ENCODE measurements at regions of chr19 and their contacts with region 1.

Region 1: GRCh38 chr19:6632002-6632621 is 37.8 kb downstream of the TNFSF14 start:
- DNase-seq: peak; percentile 89
- ATAC-seq: peak; percentile 85
- H3K4me3 Mint-ChIP-seq: no peak overlapping the region
- H3K27ac Mint-ChIP-seq: peak overlapping the region; percentile 52
- H3K4me1 Mint-ChIP-seq: peaks cover 30% of the 10 kb centered on the region
- H3K27me3 Mint-ChIP-seq: no peaks in the 10 kb centered on the region

Region 2: GRCh38 chr19:6572217-6572616 is 59.9 kb before region 1 on chr19:
- CTCF ChIA-PET with region 1: no interaction called
- DNase-seq: no peak
- ATAC-seq: no peak
- H3K4me3 Mint-ChIP-seq: no peak overlapping the region
- H3K27ac Mint-ChIP-seq: no peak overlapping the region
- H3K4me1 Mint-ChIP-seq: no peaks in the 10 kb centered on the region
- H3K27me3 Mint-ChIP-seq: peaks cover 35% of the 10 kb centered on the region

Region 3: GRCh38 chr19:6668691-6669090 is 36.6 kb after region 1 on chr19:
- CTCF ChIA-PET with region 1: interaction called, 11 read pairs
- DNase-seq: peak; percentile 58
- ATAC-seq: no peak
- H3K4me3 Mint-ChIP-seq: peak overlapping the region; percentile 99
- H3K27ac Mint-ChIP-seq: peak overlapping the region; percentile 90
- H3K4me1 Mint-ChIP-seq: peaks cover 44% of the 10 kb centered on the region
- H3K27me3 Mint-ChIP-seq: peaks cover 9% of the 10 kb centered on the region

Region 4: GRCh38 chr19:6674868-6675305 is 42.8 kb after region 1 on chr19:
- CTCF ChIA-PET with region 1: interaction called, 11 read pairs
- DNase-seq: peak; percentile 98
- ATAC-seq: peak; percentile 77
- H3K4me3 Mint-ChIP-seq: peak overlapping the region; percentile 73
- H3K27ac Mint-ChIP-seq: peak overlapping the region; percentile 90
- H3K4me1 Mint-ChIP-seq: peaks cover 69% of the 10 kb centered on the region
- H3K27me3 Mint-ChIP-seq: peaks cover 9% of the 10 kb centered on the region

Region 5: DNA sequence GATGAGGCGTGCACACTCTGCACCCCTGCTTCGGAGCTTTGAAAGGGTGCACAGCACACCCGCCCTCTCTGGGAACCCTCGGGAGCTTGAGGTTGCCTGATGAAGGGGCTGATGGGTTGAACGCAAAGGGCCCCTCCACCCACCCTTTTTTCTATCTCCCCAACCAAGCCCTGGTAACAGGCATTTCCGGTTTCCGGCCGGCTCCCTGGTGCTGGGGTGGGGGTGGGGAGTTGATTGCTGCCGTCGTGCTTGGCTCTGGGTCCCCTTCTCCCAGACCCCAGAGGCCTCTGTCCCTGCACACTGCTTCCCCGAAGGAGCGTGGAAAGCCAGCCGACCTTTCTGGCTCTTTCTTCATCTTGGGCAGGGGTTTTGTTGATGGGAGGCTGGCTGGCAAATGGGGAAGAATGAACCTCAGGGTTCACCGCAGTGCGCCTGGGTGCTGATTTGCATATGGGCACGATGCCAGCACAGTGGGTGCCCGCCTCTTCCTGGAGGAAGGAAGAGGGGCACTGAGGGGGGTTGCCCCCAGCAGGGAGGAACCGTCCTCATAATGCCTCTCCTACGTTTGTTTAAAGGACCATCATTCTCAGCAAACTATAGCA is 169.5 kb after region 1 on chr19:
- CTCF ChIA-PET with region 1: no interaction called
- DNase-seq: peak; percentile 90
- ATAC-seq: peak; percentile 74
- H3K4me3 Mint-ChIP-seq: peak overlapping the region; percentile 78
- H3K27ac Mint-ChIP-seq: peak overlapping the region; percentile 93
- H3K4me1 Mint-ChIP-seq: peaks cover 54% of the 10 kb centered on the region
- H3K27me3 Mint-ChIP-seq: no peaks in the 10 kb centered on the region

Region 6: DNA sequence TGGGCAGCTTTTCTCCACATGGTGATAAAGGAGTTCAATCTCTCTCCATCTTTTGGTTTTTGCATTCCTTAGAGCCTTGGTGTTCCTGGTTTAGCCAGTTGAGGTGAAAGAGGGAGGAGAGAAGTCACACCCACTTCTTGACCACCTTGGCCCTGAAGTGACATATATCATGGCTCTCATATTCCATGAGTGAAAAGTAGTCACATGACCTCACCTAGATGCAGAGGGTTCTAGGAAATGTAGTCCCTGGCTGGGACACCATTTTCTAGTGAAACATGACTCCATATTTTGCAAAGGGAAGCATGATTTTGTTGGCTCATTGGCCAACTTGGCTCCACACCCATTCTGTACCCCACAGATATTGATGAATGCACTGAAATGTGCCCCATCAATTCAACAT is 271.3 kb after region 1 on chr19:
- CTCF ChIA-PET with region 1: no interaction called
- DNase-seq: no peak
- ATAC-seq: no peak
- H3K4me3 Mint-ChIP-seq: no peak overlapping the region
- H3K27ac Mint-ChIP-seq: no peak overlapping the region
- H3K4me1 Mint-ChIP-seq: no peaks in the 10 kb centered on the region
- H3K27me3 Mint-ChIP-seq: no peaks in the 10 kb centered on the region